Left ventricle myocardium superior (tissue), 1 donor: ENCODE measurements at regions of chr15 and their contacts with region 1.

Region 1: GRCh38 chr15:81274931-81275707 is 48.8 kb downstream of the STARD5 start:
- DNase-seq: peak; percentile 66
- ATAC-seq: peak; percentile 88

Region 2: DNA sequence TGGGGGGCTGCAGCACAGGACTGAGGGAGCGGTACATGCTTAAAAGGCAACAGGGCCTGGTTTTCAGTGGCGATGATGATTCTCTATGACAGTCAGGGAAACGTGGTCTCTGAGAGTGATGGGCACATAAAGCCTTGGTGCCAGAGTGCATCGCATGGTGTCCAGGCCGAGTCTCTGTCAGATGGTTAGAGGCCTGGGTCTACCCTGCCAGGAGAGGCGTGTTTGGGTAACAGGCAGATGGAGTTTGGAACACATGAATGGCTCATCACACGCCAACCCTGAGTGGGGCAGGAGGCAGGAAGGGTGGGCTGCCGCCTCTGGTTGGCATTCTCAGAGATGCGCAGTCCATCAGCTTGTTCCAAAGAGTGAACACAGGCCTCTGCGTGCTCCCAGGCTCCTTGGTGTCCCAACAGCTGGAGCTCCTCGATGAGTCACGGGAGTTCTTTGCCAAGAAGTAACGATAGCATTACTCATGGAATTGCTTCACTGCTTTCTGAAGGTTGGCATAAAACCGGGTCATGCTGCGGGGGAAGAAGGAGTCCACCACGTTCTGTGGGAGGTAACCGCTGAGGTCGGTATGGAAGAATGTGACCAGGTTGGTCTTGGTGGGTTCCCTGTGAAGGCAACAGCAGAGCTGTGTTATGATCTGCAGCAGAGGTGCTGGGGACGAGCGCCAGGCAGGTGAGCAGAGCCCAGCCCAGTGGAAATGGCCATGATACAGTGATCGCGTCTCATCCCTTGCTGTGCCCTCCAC is 37.8 kb after region 1 on chr15:
- intact Hi-C with region 1: no loop called
- DNase-seq: peak; percentile 74
- ATAC-seq: peak; percentile 86

Region 3: DNA sequence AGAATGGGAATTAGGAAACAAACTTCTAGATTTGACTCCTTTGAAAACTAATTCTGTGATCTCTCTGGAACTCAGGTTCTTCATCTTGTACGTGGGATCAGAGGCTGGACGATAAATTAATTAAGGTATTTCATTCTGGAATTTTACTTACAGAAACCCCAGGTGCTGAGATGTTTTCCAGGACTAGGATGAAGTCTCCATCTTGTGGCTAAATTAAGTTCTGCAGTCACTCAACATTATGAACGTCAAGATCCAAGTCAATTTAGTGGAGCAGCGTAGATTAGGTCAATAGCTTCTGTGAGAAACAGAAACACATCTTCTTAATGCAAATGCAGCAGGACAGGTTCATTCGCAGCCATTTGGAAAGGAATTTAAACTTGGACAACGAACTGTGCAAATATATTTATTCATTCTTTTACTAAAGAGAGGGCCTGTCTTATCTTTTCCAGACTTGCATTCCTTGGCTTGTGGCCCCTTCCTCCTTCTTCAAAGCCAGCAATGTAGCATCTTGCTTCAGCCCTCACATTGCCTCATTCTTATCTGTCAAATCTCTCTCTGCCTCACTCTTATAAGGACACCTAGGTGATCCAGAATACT is 125.6 kb after region 1 on chr15:
- intact Hi-C with region 1: loop called (anchors 2 kb)
- DNase-seq: no peak
- ATAC-seq: no peak